Mucosa of descending colon (tissue), 3 donors: ENCODE measurements at regions of chr1 and their contacts with region 1.

Region 1: DNA sequence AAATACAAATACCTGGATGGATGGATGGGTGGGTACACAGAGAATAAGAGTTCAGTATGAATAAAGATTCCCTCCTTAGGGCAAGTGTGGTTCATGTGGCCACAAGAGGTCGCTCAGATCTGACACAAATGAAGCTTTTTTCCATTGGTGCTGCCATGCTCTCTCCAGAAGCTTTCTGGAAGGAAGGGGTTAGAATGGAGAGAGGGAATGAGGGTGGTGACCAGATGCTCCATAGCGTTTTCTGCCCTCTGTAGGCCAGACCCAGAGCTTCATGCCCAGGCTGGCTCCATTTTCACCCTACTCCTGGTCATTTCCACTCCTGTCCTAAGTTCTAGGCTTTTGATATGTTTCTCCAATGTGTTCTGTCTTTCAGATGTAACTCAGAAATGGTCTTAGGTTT is 3.3 kb upstream of the FCRL6 start:
- DNase-seq: peak in 2 of 3 donors; percentile 51 to 87
- ATAC-seq: peak; percentile 93
- H3K4me3 ChIP-seq: no peak overlapping the region
- H3K4me1 ChIP-seq: no peaks in the 10 kb centered on the region
- CTCF ChIP-seq: peak; percentile 47

Region 2: DNA sequence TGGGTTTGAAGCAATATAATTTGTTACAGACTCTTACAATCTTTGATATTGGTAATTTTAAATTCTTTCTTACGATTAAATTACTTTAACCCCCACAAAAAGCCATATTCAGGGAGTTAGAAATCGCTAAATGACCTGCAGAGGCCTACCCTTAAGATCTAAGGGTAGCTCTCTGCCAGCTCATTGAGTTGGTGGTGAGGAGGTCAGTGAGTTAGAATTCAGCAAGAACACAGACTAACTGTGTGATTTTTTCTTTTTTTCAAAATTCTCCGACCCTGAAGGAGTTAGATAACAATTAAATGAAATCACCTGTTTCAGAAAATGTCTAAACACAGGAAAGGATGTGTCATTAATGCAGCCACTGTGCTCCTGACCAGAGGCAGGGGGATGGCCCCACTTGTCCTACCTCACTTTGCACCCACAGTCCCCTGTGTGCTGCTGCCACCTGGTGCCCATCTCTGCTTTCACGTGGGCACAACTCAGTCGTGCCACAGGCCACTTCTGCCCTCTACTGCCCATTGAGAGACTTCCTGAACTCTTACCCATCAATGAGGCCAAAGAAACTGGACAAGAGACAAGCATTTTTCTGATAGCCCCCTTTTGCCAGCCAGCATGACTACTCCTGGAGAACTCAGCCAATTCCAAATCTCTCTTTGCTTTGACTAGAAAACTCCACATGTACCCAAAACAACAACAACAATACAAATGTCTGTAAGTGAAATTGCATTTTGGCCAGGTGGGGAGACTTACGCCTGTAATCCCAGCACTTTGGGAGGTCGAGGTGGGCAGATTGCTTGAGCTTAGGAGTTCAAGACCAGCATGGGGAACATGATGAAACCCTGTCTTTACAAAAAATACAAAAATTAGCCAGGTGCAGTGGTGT is 92.6 kb after region 1 on chr1:
- intact Hi-C with region 1: loop called (anchors 1 to 5 kb)
- DNase-seq: peak; percentile 85 to 92 (median 92)
- ATAC-seq: peak; percentile 97
- H3K4me3 ChIP-seq: no peak overlapping the region
- H3K4me1 ChIP-seq: no peaks in the 10 kb centered on the region
- CTCF ChIP-seq: peak; percentile 74

Region 3: GRCh38 chr1:160006312-160006940 is 207.5 kb after region 1 on chr1:
- intact Hi-C with region 1: loop called in 1 of 2 experiments (anchors 10 kb)
- DNase-seq: peak; percentile 69 to 88 (median 85)
- ATAC-seq: peak; percentile 86
- H3K4me3 ChIP-seq: no peak overlapping the region
- H3K4me1 ChIP-seq: no peaks in the 10 kb centered on the region
- CTCF ChIP-seq: peak; percentile 84